Activated T-helper 2 cell treated with anti-CD3 and anti-CD28 coated beads, Interferon-gamma antibody, Interleukin-2, Interleukin-4, amounts not matched to agents 10 μg/mL and 5 μg/mL and 100 μg/mL, durations not matched to agents 14 hours and 24 hours and 36 hours (primary cell): ENCODE measurements at regions of chr9 and their contacts with region 1.

Region 1: GRCh38 chr9:69877854-69878514 is 57.4 kb downstream of the CFAP95 start:
- DNase-seq: no peak
- H3K4me3 Mint-ChIP-seq: no peak overlapping the region
- H3K27ac Mint-ChIP-seq: no peak overlapping the region
- H3K4me1 Mint-ChIP-seq: peaks cover 3% of the 10 kb centered on the region
- H3K27me3 Mint-ChIP-seq: peaks cover 27% of the 10 kb centered on the region

Region 2: GRCh38 chr9:69421908-69422801 is 455.8 kb before region 1 on chr9:
- intact Hi-C with region 1: loop called (anchors 5 kb)
- DNase-seq: peak; percentile 19
- H3K4me3 Mint-ChIP-seq: no peak overlapping the region
- H3K27ac Mint-ChIP-seq: no peak overlapping the region
- H3K4me1 Mint-ChIP-seq: no peaks in the 10 kb centered on the region
- H3K27me3 Mint-ChIP-seq: peaks cover 4% of the 10 kb centered on the region

Region 3: GRCh38 chr9:69549310-69550202 is 328.4 kb before region 1 on chr9:
- intact Hi-C with region 1: loop called (anchors 2 kb)
- DNase-seq: no peak
- H3K4me3 Mint-ChIP-seq: no peak overlapping the region
- H3K27ac Mint-ChIP-seq: no peak overlapping the region
- H3K4me1 Mint-ChIP-seq: peaks cover 4% of the 10 kb centered on the region
- H3K27me3 Mint-ChIP-seq: peaks cover 30% of the 10 kb centered on the region

Region 4: GRCh38 chr9:69672596-69673310 is 205.2 kb before region 1 on chr9:
- intact Hi-C with region 1: loop called (anchors 1 kb)
- DNase-seq: peak; percentile 68
- H3K4me3 Mint-ChIP-seq: peak overlapping the region; percentile 83
- H3K27ac Mint-ChIP-seq: no peak overlapping the region
- H3K4me1 Mint-ChIP-seq: peaks cover 21% of the 10 kb centered on the region
- H3K27me3 Mint-ChIP-seq: peaks cover 40% of the 10 kb centered on the region

Region 5: GRCh38 chr9:69759421-69760277 is 118.3 kb before region 1 on chr9 and contains the start of gene PTAR1:
- intact Hi-C with region 1: loop called (anchors 5 kb)
- DNase-seq: peak; percentile 87
- H3K4me3 Mint-ChIP-seq: peak within 1 kb of the TSS; percentile 97
- H3K27ac Mint-ChIP-seq: peak within 1 kb of the TSS; percentile 94
- H3K4me1 Mint-ChIP-seq: peaks cover 25% of the 10 kb centered on the region
- H3K27me3 Mint-ChIP-seq: no peaks in the 10 kb centered on the region
- total RNA-seq, gene PTAR1: 51.1 and 57.2 TPM in 2 replicates

Region 6: DNA sequence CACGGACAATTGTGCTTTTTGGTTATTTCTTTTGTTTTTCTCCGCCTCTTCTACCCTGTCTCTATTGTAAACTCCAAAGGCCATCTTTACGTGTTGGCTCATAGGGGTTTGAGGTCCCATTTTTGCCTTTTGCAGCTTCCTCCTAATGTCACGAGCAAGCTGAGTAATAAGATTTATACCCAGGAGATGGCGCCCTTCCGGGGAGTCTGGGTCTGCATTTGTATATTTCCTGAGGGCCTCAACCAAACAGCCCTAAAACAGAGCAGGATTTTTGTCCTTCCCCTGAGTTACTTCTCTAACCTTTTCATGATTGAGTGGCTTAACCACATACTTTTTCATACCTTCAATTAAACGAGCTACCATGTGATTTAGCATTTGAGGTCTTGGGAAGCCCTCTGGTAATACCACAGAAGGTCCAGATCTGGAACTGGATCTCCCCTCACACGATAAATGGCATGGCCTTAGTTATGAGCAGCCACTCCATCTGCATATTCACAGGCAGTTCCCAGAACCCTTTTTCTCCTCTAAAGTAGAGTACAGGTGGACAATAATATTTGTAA is 68.6 kb before region 1 on chr9:
- intact Hi-C with region 1: loop called (anchors 1 kb)
- DNase-seq: peak; percentile 28
- H3K4me3 Mint-ChIP-seq: no peak overlapping the region
- H3K27ac Mint-ChIP-seq: peak overlapping the region; percentile 18
- H3K4me1 Mint-ChIP-seq: peaks cover 32% of the 10 kb centered on the region
- H3K27me3 Mint-ChIP-seq: peaks cover 4% of the 10 kb centered on the region

Region 7: DNA sequence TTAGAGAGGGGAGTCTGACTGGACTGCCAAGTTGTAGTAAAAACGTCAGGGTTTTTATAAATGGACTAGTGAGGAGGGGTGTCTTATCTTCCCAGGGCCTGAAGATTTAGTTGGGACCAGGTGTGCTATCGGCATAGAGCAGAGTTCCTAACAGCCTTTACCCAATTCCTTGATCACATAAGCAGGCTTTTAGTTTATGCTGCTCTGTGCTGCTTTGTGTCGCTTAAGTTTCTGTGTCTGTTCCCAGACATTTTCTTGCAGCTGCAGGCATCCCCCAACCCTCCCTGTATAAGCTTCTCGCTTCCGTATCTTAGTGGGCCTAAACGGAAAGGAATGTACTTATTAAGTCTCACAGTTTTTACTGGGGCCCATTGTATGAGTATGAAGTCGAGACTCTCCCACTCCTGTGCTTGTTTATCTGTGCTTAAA is 378.2 kb after region 1 on chr9:
- intact Hi-C with region 1: no loop called
- DNase-seq: no peak
- H3K4me3 Mint-ChIP-seq: no peak overlapping the region
- H3K27ac Mint-ChIP-seq: no peak overlapping the region
- H3K4me1 Mint-ChIP-seq: peaks cover 28% of the 10 kb centered on the region
- H3K27me3 Mint-ChIP-seq: peaks cover 7% of the 10 kb centered on the region